Right ventricle myocardium inferior (tissue), 1 donor: ENCODE measurements at regions of chr2 and their contacts with region 1.

Region 1: GRCh38 chr2:8681786-8682692 is at the start of gene ID2:
- DNase-seq: peak; percentile 100
- ATAC-seq: peak; percentile 87
- total RNA-seq, gene ID2: 31.3 TPM

Region 2: GRCh38 chr2:7097348-7097895 is 1584.6 kb before region 1 on chr2:
- intact Hi-C with region 1: loop called (anchors 10 kb)
- DNase-seq: peak; percentile 90
- ATAC-seq: peak; percentile 83

Region 3: GRCh38 chr2:7725171-7725849 is 956.7 kb before region 1 on chr2:
- intact Hi-C with region 1: loop called (anchors 10 kb)
- DNase-seq: no peak
- ATAC-seq: no peak

Region 4: GRCh38 chr2:8215159-8215863 is 466.7 kb before region 1 on chr2:
- intact Hi-C with region 1: loop called (anchors 5 kb)
- DNase-seq: no peak
- ATAC-seq: no peak

Region 5: GRCh38 chr2:8438476-8438875 is 243.6 kb before region 1 on chr2:
- intact Hi-C with region 1: loop called (anchors 10 kb)
- DNase-seq: no peak
- ATAC-seq: peak; percentile 23

Region 6: GRCh38 chr2:8583400-8584173 is 98.5 kb before region 1 on chr2:
- intact Hi-C with region 1: loop called (anchors 2 kb)
- DNase-seq: peak; percentile 98
- ATAC-seq: peak; percentile 96

Region 7: DNA sequence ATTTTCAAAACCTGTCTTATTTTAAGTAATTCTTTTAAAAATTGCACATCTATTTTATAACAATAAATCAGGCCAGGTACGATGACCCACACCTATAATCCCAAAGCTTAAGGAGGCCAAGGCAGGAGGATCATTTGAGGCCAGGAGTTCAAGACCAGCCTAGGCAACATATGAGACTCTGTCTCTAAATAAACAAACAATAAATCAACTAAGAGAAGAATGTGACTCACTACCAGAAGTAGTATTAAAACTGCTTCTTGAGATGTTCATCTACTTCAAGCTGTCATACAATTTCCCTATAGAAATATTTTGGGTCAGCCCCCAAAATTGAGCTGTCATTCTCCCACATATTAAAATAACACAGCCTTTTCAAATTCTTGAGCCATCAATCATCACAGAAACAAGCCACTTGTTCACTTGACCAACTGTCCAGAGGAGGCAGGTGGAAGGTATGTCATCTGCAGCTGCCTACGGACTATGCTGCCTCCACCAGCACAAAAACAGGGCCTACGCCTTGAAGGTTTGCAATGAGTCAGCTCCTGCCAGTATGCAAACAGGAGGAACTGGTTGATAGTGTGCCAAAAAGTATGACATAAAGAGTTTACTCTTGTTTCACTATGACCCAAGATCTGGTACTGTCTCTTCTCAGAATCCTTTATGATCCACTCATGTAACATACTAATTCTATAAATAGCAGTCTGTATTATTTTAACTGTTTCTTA is 121.8 kb after region 1 on chr2:
- intact Hi-C with region 1: no loop called
- DNase-seq: no peak
- ATAC-seq: no peak

Region 8: GRCh38 chr2:8860239-8860638 is 178.2 kb after region 1 on chr2:
- intact Hi-C with region 1: no loop called
- DNase-seq: no peak
- ATAC-seq: no peak

Region 9: GRCh38 chr2:9333591-9334171 is 651.6 kb after region 1 on chr2:
- intact Hi-C with region 1: no loop called
- DNase-seq: no peak
- ATAC-seq: peak; percentile 84